MCF 10A (cell line): ENCODE measurements at regions of chr19 and their contacts with region 1.

Region 1: DNA sequence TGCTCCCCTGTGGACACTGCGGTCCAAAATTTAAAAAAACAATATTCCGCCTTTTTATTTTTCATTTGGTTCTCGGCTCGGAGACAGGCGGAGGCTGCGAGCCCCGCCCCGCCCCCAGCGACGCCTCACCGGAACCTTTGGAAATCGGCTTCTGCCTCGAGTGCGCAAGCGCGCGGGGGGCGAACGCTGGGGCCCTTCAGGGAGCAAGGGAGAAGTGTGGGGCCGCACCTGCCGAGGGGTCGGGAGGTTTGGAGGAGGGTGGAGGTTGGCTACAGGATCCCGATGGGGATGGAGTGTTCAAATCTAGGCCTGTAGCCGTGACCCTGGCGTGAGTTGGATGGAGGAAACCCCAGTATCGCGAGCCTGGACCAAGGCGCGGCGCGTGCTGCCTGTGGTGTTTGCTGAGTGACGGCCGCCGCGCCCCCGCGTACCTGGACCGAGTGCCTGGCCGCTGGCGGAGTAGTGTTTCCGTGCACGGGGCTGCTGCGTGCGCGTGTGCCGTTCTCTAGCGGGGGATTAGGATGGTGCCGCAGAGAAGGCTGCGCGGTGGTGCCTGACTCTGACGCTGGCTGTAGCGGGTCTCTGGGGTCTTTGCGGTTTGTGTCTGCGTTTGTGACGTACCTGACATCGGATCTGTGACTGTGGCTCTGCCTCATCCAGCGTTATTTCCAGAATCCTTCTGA is 565 bp upstream of the ZFP30 start:
- DNase-seq: peak; percentile 87
- H3K4me3 Mint-ChIP-seq: peak overlapping the region; percentile 89
- H3K27ac Mint-ChIP-seq: peak overlapping the region; percentile 91
- H3K4me1 Mint-ChIP-seq: peaks cover 9% of the 10 kb centered on the region
- H3K27me3 Mint-ChIP-seq: no peaks in the 10 kb centered on the region
- CTCF ChIP-seq: no peak

Region 2: DNA sequence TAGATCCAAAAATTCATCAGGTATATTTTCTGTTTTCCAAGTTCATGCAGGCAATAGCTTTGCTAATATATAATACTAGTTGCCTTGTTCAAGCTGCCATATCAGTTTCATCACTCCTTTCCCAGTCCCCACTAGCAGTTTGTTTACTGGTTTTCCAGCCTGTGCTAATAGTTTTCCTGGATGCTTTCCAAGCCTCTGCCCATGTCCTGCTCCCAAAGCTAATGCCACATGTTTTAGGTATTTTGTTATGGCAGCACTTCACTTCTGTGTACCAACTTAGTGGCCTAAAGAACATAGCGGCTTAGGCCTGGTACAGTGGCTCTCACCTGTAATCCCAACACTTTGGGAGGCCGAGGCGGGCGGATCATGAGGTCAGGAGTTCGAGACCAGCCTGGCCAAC is 313.1 kb before region 1 on chr19:
- CTCF ChIA-PET with region 1: no interaction called
- POLR2A ChIA-PET with region 1: no interaction called
- intact Hi-C with region 1: no loop called
- DNase-seq: no peak
- H3K4me3 Mint-ChIP-seq: no peak overlapping the region
- H3K27ac Mint-ChIP-seq: no peak overlapping the region
- H3K4me1 Mint-ChIP-seq: no peaks in the 10 kb centered on the region
- H3K27me3 Mint-ChIP-seq: no peaks in the 10 kb centered on the region
- CTCF ChIP-seq: no peak

Region 3: GRCh38 chr19:37572203-37572602 is 83.6 kb before region 1 on chr19:
- CTCF ChIA-PET with region 1: no interaction called
- POLR2A ChIA-PET with region 1: interaction called, 3 read pairs
- intact Hi-C with region 1: loop called (anchors 5 kb)
- DNase-seq: peak; percentile 52
- H3K4me3 Mint-ChIP-seq: no peak overlapping the region
- H3K27ac Mint-ChIP-seq: no peak overlapping the region
- H3K4me1 Mint-ChIP-seq: no peaks in the 10 kb centered on the region
- H3K27me3 Mint-ChIP-seq: no peaks in the 10 kb centered on the region
- CTCF ChIP-seq: no peak

Region 4: DNA sequence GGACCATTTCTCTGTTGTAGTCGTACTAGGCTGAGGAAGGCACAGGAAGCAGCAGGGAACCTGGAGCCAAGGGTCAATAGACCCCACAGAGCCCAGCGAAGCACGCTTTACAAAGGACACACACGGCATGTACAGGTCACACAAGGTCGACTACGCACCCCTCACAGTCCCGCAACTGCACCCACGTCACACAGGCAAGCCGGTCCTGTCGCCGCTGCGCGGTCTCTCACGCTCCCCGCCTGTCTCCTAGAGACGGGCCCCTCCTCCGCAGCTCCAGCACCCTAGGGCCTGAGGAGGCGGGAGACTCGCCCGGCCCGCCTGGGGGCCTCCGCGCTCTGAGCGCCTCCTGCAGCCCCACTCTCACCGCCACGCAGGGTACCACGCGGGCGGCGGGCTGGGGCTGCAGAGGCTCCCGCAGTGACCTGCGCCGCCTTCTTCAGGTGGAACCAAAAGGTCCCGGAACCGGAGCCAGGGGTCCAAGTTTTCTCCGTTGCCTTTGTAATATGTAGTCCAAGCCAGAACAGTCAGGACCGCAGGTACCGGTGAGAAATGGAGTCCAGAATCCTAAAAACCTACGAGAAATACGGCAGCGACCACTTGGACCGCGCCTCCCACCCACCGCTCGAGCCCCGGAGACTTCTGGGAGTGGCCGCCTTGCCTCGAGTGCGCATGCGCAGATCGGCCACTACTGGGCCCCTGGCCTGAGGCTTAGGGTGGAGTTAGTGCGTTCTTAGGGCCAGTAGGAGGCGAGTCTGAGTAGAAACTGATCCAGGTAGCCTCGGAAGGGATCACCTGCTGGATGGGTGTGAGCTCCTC is 63.5 kb after region 1 on chr19 and contains the start of gene ZNF607:
- CTCF ChIA-PET with region 1: no interaction called
- POLR2A ChIA-PET with region 1: interaction called, 10 read pairs
- intact Hi-C with region 1: loop called (anchors 1 kb)
- DNase-seq: peak; percentile 94
- H3K4me3 Mint-ChIP-seq: peak within 1 kb of the TSS; percentile 96
- H3K27ac Mint-ChIP-seq: peak within 1 kb of the TSS; percentile 85
- H3K4me1 Mint-ChIP-seq: peaks cover 9% of the 10 kb centered on the region
- H3K27me3 Mint-ChIP-seq: no peaks in the 10 kb centered on the region
- CTCF ChIP-seq: peak; percentile 32
- total RNA-seq, gene ZNF607: 3.0 and 3.4 TPM in 2 replicates